Common myeloid progenitor, CD34-positive (primary cell): ENCODE measurements at regions of chr11 and their contacts with region 1.

Region 1: DNA sequence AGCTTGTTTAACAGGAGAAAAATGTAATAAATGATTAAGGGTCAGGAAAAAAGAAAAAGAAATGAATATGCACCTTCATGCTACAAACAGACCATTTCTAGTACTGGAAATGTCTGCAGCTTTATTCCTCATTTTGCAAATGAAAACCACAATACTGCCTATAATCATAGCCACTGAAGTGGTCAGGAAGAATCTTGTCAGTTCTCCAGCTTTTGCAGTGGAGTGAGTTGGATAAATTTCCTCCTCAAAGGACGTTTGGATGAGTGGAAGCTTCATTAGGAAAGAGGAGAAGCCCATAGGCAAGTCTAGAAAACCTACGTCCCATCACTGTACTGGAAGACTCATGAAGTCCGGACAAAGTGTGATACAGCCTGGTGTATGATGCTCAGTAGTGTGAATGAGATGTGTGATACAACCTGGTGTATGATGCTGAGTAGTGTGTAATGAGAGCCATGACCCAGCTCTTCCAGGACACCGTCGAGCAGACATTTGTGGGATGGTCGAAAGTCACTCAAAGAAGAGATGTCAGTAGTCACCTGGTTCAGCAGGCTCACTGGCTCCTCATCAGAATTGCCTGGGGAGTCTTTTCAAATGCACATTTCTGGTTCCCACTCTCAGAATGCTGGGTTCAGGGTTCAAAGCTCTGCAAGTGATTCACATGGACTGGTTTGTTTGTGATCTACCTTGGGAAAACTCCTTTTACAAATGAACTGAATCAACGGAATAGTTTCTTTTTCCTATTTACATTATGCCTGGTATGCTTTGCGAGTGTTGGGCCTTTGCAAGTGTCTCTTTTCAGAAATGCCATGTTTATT is 101.3 kb downstream of the PDHX start:
- DNase-seq: no peak
- H3K4me3 ChIP-seq: no peak overlapping the region
- H3K27ac ChIP-seq: no peak overlapping the region
- H3K4me1 ChIP-seq: peaks cover 0 to 7% (median 3%) of the 10 kb centered on the region in 4 experiments
- H3K27me3 ChIP-seq: no peaks in the 10 kb centered on the region

Region 2: GRCh38 chr11:35030716-35031213 is 13.0 kb after region 1 on chr11:
- CTCF ChIA-PET with region 1: interaction called, 11 read pairs
- POLR2A ChIA-PET with region 1: interaction called, 3 read pairs
- DNase-seq: peak in 2 of 3 donors; percentile 67 to 76
- H3K4me3 ChIP-seq: no peak overlapping the region
- H3K27ac ChIP-seq: no peak overlapping the region
- H3K4me1 ChIP-seq: peaks cover 0 to 41% (median 27%) of the 10 kb centered on the region in 4 experiments
- H3K27me3 ChIP-seq: no peaks in the 10 kb centered on the region

Region 3: DNA sequence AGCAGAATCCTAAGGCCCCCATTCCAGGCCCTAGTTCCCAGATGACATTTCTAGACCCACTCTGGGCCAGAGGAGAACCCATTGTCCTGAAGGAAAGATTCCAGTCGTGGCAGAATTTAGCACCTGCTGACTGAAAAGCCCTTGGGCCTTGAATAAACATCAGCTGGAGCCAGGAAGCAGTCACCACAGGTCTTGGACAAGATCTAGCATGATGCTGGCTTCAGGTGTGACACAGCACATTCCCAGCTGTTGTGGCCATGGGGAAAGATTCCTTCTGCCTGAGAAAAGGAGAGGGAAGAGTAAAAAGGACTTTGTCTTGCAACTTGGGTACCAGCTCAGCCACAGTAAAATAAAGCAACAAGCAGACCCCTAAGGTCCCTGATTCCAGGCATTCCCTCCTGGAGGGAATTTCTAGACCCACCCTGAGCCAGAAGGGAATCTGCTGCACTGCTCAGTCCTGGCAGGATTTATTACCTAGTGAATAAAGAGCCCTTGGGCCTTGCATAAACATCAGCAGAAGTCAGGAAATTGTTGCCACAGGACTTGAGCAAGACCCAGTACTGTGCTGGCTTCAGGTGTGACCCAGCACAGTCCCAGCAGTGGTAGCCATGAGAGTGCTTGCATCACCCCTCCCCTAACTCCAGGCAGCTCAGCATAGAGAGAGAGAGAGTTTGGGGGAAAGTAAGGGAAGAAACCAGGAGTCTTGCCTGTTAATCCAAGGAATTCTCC is 550.2 kb after region 1 on chr11:
- CTCF ChIA-PET with region 1: no interaction called
- POLR2A ChIA-PET with region 1: no interaction called
- DNase-seq: no peak
- H3K4me3 ChIP-seq: no peak overlapping the region
- H3K27ac ChIP-seq: no peak overlapping the region
- H3K4me1 ChIP-seq: no peaks in the 10 kb centered on the region
- H3K27me3 ChIP-seq: peaks cover 0 to 4% (median 2%) of the 10 kb centered on the region in 5 experiments